Sciatic nerve (tissue), 2 donors: ENCODE measurements at regions of chr13 and their contacts with region 1.

Region 1: GRCh38 chr13:26929971-26930730 is 169.6 kb upstream of the GPR12 start:
- DNase-seq: peak; percentile 87
- ATAC-seq: peak; percentile 74

Region 2: GRCh38 chr13:26707122-26708006 is 222.8 kb before region 1 on chr13:
- intact Hi-C with region 1: loop called (anchors 5 kb)
- DNase-seq: no peak
- ATAC-seq: no peak

Region 3: DNA sequence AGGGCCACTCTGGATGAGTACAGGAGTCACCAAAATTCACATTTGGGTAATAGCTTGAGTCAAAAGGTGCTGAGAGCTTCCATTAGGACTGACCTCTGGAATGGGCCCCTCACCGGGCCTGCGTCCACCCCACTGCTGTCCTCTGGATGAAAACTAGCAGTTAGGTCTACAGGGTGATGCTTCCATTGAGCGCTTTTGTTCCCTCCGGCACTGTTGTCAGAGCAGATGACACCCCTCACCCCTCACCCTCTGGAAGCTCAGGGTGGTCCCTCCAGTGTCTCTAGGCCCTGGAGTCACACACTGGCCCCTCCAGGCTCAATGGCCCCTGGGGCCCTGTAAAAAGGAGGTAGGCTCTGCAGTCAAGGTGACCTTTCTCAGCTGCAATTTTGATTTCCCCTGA is 18.2 kb after region 1 on chr13:
- intact Hi-C with region 1: loop called (anchors 1 kb)
- DNase-seq: no peak
- ATAC-seq: no peak

Region 4: GRCh38 chr13:27533155-27533643 is 603.0 kb after region 1 on chr13:
- intact Hi-C with region 1: no loop called
- DNase-seq: peak; percentile 91
- ATAC-seq: peak; percentile 90